ENCODE measurements at regions of chr10 and their contacts with region 1.

Region 1: DNA sequence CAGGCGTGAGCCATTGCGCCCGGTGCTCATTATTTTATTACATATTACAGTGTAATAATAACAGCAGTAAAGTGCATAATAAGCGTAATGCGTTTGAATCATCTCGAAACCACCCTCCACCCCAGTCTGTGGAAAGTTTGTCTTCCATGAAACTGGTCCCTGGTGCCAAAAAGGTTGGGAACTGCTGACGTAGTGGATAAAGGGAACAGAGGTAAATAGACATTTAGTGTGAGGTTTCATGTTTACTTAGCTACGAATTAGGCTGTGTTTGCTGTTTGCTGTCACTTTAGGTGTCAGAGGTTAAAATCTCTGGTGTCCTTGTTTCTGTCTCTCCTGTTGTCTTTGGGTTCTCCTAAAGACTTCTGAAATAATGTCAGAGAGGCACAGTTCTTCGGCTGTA is 60.3 kb upstream of the SLC39A12 start:
- H3K4me3 Mint-ChIP-seq: no peak overlapping the region
- H3K27ac Mint-ChIP-seq: no peak overlapping the region
- H3K4me1 Mint-ChIP-seq: peaks cover 24% of the 10 kb centered on the region
- H3K27me3 Mint-ChIP-seq: no peaks in the 10 kb centered on the region

Region 2: GRCh38 chr10:17801507-17801906 is 89.9 kb before region 1 on chr10:
- intact Hi-C with region 1: no loop called
- H3K4me3 Mint-ChIP-seq: no peak overlapping the region
- H3K27ac Mint-ChIP-seq: peak overlapping the region; percentile 44
- H3K4me1 Mint-ChIP-seq: peaks cover 34% of the 10 kb centered on the region
- H3K27me3 Mint-ChIP-seq: no peaks in the 10 kb centered on the region

Region 3: DNA sequence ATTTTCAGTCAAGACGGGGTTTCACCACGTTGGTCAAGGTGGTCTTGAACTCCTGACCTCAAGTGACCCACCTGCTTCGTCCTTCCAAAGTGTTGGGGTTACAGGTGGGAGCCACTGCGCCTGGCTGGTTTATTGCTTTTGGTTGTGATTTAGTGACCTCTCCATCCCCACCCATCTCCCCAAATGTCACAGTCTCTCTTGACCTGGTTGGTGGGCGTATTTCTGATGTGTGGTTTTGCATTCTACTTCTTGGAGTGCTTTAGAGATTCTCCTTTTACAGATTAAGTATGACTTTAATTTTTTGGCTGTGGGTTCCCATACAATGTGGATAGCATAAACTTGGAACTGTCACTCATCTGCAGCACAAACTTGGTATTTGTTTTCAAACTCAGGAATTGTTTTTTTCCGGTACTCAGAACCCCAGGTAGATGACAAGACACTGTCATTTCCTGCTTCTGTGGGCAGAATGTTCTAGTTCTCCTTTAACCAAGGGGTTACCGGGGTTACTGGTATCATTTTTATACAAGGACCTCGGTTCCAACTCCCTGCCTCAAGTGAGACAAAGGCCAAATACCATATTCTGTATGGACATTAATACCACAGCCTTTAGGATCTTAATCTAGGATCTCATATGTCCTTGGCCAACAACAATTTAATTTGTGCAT is 31.8 kb before region 1 on chr10:
- intact Hi-C with region 1: loop called (anchors 5 kb)
- H3K4me3 Mint-ChIP-seq: no peak overlapping the region
- H3K27ac Mint-ChIP-seq: peak overlapping the region; percentile 63
- H3K4me1 Mint-ChIP-seq: peaks cover 52% of the 10 kb centered on the region
- H3K27me3 Mint-ChIP-seq: no peaks in the 10 kb centered on the region

Measured in dendritic cell treated with granulocyte-macrophage colony-stimulating factor and Interleukin-4, amounts not matched to agents 40 ng/mL and 50 ng/mL, for 4 days (primary cell).